Left cardiac atrium (tissue), 4 donors: ENCODE measurements at regions of chr6 and their contacts with region 1.

Region 1: DNA sequence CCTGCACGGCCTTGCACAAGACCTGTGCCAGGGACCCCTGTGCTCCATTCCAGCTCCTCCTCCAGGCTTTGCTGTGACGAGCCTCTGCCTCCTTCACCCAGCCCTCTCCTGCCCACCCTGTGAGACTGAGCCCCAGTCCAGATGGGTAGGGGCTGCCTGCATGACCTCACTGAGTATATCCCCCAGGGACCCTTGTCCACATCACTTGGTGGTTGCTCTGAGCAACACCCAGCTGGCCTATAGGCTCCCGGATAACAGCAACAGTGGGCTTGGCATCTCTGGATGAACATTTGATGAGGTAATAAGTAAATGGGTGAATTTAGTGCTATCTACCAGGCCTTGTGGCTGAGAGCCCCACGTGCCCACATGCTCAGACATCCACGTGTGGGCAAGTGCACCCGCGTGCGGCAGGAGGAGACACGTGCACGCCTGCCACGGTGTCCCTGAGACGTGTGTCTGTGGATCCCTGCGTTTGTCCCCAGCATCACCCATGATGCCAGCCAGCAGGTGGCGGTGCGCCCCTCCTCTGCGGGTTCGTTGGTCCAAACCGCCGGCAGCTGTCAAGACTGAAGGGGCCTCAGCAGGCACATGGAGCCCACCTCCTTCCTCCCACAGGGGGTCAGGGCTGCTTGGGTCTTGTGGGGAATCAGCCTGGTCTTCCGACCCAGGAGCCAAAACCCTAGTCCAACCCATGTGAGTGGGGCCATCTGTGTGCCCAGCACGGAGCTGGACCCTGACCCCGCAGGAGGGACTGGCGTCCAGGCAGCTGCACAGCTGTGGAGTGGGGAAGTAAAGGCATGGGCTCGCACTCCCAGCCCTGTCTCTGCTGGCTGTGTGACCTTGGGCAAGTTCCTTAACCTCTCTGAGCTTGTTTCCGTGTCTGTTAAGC is 45.9 kb downstream of the FGD2 start:
- DNase-seq: peak; percentile 93
- ATAC-seq: peak; percentile 78 to 85

Region 2: DNA sequence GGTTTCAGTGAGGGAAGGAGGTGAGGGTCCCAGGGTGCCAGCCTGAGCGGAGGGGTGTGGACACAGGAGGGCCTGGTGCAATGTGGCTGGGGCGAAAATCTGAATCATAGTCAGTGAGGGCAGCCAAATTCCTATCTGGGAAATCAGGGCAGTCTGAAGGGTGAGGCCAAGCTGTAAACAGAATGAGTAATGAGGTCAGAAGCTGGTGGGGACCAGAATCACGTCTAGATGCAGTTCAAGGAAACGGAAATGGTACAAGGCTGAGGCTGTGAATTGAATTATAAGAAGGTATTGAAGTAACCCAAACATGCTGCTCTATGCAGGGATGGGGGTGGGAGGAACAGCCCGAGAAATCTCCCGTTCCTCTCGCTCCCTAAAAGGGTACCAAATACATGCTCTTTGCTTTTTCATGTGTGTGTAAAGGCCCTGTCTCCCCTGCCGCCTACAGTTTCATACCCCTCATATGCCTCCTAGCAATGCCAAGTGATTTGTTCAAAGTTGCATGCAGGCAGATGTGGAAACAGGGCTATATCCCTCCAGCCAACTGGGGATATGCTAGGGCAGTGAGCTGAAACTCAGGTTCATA is 83.3 kb after region 1 on chr6:
- intact Hi-C with region 1: loop called in 1 of 2 experiments (anchors 1 kb)
- DNase-seq: peak; percentile 40
- ATAC-seq: peak; percentile 7 to 65

Region 3: DNA sequence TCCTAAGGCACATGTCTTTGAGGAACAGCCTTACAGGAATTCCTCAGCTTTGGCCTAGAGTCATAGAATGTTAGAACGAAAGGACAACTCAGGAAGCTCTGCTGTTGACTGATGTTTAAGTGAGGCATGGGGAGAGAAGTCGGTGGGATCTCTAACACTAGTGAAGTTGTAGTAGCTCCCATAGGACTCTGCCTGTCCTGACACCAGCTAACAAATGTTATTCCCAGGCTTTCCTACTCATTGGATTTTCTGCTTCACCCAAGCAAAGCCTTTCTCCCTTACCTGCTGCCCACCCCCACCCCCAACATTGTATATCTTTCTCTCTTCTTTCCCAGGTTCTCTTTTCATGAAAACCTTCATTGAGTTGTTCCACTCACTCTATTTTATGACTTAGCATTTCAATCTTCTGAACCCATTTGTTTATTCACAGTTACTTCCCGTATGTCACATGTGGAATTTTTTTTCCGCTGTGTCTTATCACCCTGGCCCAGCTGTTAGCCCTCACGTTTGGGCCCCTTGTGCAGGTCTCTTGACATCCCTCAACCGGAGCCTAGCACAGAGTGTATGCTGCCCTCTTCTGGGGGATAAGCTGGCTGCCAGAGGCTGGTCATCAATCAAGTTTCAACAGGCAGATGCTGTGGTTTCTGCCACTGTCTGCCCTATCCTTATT is 263.2 kb after region 1 on chr6:
- intact Hi-C with region 1: no loop called
- DNase-seq: peak; percentile 46
- ATAC-seq: peak in 1 of 2 donors; percentile 50